ENCODE measurements at regions of chr21 and their contacts with region 1.

Region 1: GRCh38 chr21:33360881-33361602 is 36.3 kb downstream of the IFNAR1 start:
- DNase-seq: peak; percentile 83 to 89
- ATAC-seq: peak; percentile 87
- H3K4me3 ChIP-seq: no peak overlapping the region
- H3K27ac ChIP-seq: no peak overlapping the region
- H3K4me1 ChIP-seq: peaks cover 0 to 5% of the 10 kb centered on the region in 2 donors
- H3K27me3 ChIP-seq: no peaks in the 10 kb centered on the region

Region 2: DNA sequence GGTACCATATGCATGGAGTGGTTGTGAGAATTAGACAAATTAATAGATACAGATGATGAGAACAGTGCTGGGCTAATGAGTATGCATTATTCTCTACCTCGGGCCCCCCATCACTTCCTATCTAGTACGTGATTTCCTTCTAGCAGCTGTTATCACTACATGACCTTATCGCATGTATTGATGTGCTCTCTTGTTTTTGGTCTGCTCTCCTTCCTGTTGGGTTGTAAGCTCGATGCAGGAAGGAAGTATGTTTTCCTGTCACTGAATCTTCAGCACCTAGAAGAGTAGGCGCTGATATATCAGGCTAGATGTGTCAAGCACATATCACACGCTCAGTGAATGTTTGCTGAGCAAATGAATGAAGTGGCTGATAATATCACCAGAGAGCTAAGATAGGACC is 175.2 kb before region 1 on chr21:
- intact Hi-C with region 1: no loop called
- DNase-seq: no peak
- ATAC-seq: no peak
- H3K4me3 ChIP-seq: no peak overlapping the region
- H3K27ac ChIP-seq: no peak overlapping the region
- H3K4me1 ChIP-seq: no peaks in the 10 kb centered on the region
- H3K27me3 ChIP-seq: no peaks in the 10 kb centered on the region

Region 3: DNA sequence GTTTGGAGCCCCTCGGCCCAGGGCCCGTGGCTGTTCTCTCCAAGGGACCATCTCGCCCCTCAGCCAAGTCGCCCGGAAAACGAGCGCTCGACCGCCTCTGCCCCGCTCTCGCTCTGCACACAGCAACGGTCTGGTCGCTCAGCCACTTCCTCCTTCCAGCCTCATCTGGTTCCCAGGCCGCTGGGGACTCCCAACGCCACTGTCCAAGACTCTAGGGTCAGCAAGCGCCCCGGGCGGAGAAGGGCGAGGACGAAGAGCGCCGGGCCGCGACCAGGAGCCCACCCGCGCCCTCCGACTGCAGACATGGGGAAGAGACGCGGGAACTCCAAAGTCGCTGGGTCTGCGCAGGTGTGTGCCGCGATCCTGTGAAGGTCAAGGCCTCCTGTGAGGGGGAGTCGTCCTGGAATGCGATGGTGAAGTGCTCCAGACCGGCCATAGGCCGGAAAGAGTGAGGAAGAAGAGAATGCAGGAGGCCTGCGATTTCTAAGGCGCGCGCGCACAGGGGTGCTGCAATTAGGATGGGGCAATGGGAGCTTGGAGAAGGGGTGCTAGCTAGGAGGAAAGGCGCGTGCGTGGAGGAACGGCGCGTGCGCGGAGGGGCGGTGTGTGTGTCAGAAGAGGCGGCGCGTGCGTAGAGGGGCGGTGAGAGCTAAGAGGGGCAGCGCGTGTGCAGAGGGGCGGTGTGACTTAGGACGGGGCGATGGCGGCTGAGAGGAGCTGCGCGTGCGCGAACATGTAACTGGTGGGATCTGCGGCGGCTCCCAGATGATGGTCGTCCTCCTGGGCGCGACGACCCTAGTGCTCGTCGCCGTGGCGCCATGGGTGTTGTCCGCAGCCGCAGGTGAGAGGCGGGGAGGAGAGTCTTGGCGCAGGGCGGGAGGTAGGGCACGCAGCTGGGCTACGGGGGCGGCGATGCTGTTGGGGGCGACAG is 36.5 kb before region 1 on chr21 and contains the start of gene IFNAR1:
- intact Hi-C with region 1: no loop called
- DNase-seq: peak; percentile 99 to 100
- ATAC-seq: peak; percentile 100
- H3K4me3 ChIP-seq: peak within 1 kb of the TSS; percentile 79 to 89
- H3K27ac ChIP-seq: peak within 1 kb of the TSS; percentile 24 to 93
- H3K4me1 ChIP-seq: no peaks in the 10 kb centered on the region
- H3K27me3 ChIP-seq: no peaks in the 10 kb centered on the region
- total RNA-seq, gene IFNAR1: 45.6 to 59.3 TPM

Region 4: DNA sequence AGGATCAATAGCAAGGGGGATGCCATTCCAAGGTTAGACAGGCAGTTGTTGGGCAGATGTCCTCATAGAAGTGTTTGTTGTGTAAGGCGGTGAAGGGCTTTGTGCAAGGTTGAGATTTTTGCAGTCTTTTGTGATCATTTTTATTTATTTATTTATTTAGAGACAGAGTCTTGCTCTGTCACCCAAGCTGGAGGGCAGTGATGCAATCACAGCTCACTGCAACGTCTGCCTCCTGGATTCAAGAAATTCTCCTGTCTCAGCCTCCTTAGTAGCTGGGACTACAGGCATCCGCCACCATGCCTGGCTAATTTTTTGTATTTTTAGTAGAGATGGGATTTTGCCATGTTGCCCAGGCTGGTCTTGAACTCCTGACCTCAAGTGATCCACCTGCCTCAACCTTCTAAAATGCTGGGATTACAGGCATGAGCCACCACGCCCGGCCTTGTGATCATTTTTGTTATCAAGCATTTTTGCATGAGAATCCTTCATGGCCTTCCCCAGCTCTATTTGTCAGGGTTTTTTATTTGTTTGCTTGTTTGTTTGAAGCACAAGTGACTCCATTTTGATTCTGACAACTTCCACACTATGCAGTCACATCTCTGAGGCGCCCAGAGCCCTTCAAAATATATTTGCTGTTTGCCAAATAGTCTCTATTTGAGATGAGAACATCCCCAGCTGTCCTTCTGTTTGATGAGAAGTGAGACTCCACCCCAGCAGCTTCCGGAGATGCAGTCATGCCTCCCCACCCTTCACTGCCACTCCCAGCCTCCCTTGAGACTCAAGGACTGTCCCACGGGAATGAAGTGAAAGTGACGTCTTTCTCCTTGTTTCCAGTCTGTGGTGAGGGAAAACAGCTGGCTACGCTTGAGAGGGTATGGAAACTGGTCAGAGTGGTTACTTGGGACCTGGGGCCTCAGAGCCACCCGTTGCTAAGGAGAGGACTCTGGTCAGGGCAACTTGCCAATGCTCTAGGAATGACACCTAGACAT is 80.7 kb after region 1 on chr21:
- intact Hi-C with region 1: loop called (anchors 2 to 5 kb)
- DNase-seq: peak in 1 of 2 donors; percentile 68
- ATAC-seq: peak; percentile 37
- H3K4me3 ChIP-seq: no peak overlapping the region
- H3K27ac ChIP-seq: peak overlapping the region in 1 of 2 donors; percentile 5
- H3K4me1 ChIP-seq: no peaks in the 10 kb centered on the region
- H3K27me3 ChIP-seq: no peaks in the 10 kb centered on the region

Region 5: GRCh38 chr21:33449616-33450015 is 88.6 kb after region 1 on chr21:
- intact Hi-C with region 1: loop called in 1 of 2 experiments (anchors 5 kb)
- DNase-seq: no peak
- ATAC-seq: no peak
- H3K4me3 ChIP-seq: no peak overlapping the region
- H3K27ac ChIP-seq: no peak overlapping the region
- H3K4me1 ChIP-seq: no peaks in the 10 kb centered on the region
- H3K27me3 ChIP-seq: no peaks in the 10 kb centered on the region

Region 6: DNA sequence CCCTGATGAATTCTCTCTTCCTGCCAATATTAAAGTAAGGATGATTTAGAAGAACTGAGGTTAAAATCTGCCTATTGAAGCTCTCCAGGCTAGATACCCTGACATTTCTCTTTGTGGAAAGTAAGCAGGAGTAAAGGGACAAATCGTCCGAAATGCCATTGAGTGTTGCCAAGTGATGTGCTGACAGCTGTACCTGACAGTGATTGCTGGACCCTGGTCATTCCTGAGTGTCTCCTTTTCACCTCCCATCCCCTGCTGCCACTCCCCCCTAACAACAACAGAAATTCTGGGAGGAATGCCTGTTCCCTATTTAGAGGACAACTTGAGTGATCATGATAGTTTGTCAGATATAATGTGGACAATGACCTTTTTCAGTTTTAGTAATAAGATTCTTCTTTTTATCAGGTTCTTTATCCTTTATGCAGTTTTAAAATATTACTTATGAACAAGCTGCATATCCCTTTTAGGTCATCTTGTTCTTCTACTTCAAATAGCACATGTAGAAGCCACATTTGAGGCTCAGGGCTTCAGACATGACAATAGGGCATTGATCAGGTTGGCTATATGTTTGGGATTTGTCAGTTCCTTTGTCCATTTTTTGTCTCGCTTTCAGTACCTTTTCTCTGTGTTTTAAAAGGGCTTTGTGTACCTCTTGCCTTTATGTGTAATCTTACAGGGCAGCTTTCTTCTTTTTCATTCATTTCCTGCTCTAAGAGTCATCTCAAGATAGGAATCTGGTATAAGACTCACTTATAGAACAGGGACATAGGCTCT is 337.2 kb after region 1 on chr21:
- intact Hi-C with region 1: no loop called
- DNase-seq: no peak
- ATAC-seq: no peak
- H3K4me3 ChIP-seq: no peak overlapping the region
- H3K27ac ChIP-seq: no peak overlapping the region
- H3K4me1 ChIP-seq: peaks cover 4 to 5% of the 10 kb centered on the region in 2 donors
- H3K27me3 ChIP-seq: no peaks in the 10 kb centered on the region

Measured in aorta (tissue), 5 donors.